ENCODE measurements at regions of chr4 and their contacts with region 1.

Region 1: GRCh38 chr4:112636688-112637551 is at the starts of genes LARP7 and ZGRF1:
- DNase-seq: peak; percentile 99
- ATAC-seq: peak; percentile 95
- H3K4me3 Mint-ChIP-seq: no peak within 1 kb of the TSS
- H3K27ac Mint-ChIP-seq: peak within 1 kb of the TSS; percentile 68
- H3K4me1 Mint-ChIP-seq: peaks cover 23% of the 10 kb centered on the region
- H3K27me3 Mint-ChIP-seq: no peaks in the 10 kb centered on the region
- total RNA-seq, gene LARP7: 46.5 to 47.1 TPM
- total RNA-seq, gene ZGRF1: 38.4 to 45.0 TPM

Region 2: DNA sequence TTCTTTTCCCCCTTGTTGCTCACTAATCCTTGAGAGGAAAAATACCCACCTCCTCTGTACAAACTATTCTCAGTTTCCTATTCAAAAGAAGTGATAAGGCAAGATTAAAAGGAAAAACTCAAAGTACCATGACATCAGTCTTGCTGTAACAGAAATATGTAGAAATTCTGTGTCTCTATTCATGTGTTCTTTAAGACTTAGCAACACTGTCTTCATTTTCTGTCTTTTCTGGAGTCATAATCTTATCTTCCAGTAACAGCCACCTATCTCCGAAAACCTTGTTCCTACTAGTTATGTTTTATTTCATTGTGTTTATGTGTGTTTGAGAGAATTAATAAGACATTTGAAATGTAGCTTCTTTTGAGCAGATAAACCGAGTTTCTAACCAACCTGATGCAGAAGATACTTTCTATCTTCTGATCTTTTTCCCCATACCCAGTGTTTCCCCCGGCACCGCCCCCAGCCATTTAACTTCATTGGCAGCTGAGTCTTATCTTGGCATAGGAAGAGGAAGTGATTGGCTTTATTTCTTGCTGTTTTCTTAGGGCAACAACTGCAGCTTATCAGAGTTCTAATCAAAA is 483.6 kb before region 1 on chr4:
- CTCF ChIA-PET with region 1: no interaction called
- POLR2A ChIA-PET with region 1: no interaction called
- intact Hi-C with region 1: loop called in 1 of 2 experiments (anchors 2 kb)
- DNase-seq: peak; percentile 45
- ATAC-seq: peak; percentile 59
- H3K4me3 Mint-ChIP-seq: peak overlapping the region; percentile 62
- H3K27ac Mint-ChIP-seq: peak overlapping the region; percentile 91
- H3K4me1 Mint-ChIP-seq: peaks cover 60% of the 10 kb centered on the region
- H3K27me3 Mint-ChIP-seq: no peaks in the 10 kb centered on the region

Region 3: GRCh38 chr4:112664611-112665010 is 27.7 kb after region 1 on chr4:
- CTCF ChIA-PET with region 1: no interaction called
- POLR2A ChIA-PET with region 1: no interaction called
- intact Hi-C with region 1: no loop called
- DNase-seq: no peak
- ATAC-seq: no peak
- H3K4me3 Mint-ChIP-seq: no peak overlapping the region
- H3K27ac Mint-ChIP-seq: no peak overlapping the region
- H3K4me1 Mint-ChIP-seq: no peaks in the 10 kb centered on the region
- H3K27me3 Mint-ChIP-seq: no peaks in the 10 kb centered on the region

Region 4: DNA sequence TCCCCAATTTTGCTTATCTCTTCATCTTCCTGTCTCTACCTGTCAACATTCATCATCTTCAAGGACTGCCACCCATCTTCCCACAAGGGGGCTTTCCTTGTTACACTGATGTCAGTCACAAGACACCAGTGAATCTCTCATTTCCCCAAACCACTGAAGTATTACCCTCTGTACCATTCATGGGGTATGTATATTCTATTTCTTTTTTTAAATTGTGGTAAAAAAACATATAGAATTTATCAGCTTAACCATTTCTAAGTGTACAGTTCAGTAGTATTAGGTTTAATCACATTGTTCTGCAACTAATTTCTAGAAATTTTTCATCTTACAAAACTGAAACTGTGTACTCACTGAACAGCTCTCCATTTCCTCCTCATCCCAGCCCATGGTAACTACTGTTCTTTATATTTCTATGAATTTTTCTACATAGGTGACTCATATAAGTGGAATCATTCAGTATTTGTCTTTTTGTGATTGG is 98.6 kb after region 1 on chr4:
- CTCF ChIA-PET with region 1: no interaction called
- POLR2A ChIA-PET with region 1: no interaction called
- intact Hi-C with region 1: loop called in 1 of 2 experiments (anchors 1 kb)
- DNase-seq: peak; percentile 23
- ATAC-seq: peak; percentile 94
- H3K4me3 Mint-ChIP-seq: no peak overlapping the region
- H3K27ac Mint-ChIP-seq: peak overlapping the region; percentile 72
- H3K4me1 Mint-ChIP-seq: peaks cover 18% of the 10 kb centered on the region
- H3K27me3 Mint-ChIP-seq: no peaks in the 10 kb centered on the region

Region 5: DNA sequence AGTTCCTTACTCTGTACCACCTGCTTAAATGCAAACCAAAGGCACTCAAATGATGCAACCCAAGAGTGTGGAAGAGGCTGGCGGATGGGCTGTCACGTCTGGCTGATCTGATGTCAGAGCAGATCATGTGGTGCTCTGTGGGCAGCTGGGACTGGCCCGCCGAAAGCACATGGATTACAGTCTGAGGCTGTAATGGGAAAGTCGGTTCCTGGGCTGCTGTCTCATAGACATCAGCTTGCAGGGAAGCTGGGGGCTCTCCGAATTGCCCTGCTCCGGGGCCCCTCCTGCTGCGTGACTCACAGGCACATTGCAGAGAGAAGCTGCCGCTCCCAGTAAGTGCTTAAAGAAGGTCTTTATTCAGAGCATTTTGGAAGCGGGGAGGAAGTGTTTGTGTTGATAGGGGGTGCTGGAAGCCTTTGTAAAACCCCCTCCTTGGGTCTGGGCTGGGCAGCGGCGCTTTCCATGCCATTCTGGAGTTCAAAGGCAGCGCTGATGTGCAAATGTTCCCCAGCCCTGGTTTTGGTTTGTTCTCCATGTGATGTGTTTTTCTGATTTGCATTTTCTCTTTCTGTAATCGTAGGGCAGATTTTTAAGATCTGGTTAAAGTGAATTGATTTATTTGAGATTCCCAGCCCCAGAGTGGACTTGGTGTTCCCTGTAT is 181.1 kb after region 1 on chr4:
- CTCF ChIA-PET with region 1: no interaction called
- POLR2A ChIA-PET with region 1: no interaction called
- intact Hi-C with region 1: loop called in 1 of 2 experiments (anchors 1 kb)
- DNase-seq: peak; percentile 85
- ATAC-seq: peak; percentile 95
- H3K4me3 Mint-ChIP-seq: peak overlapping the region; percentile 73
- H3K27ac Mint-ChIP-seq: peak overlapping the region; percentile 85
- H3K4me1 Mint-ChIP-seq: peaks cover 17% of the 10 kb centered on the region
- H3K27me3 Mint-ChIP-seq: peaks cover 35% of the 10 kb centered on the region

Region 6: GRCh38 chr4:112889619-112890527 is 253.0 kb after region 1 on chr4:
- CTCF ChIA-PET with region 1: no interaction called
- POLR2A ChIA-PET with region 1: no interaction called
- intact Hi-C with region 1: no loop called
- DNase-seq: no peak
- ATAC-seq: no peak
- H3K4me3 Mint-ChIP-seq: no peak overlapping the region
- H3K27ac Mint-ChIP-seq: no peak overlapping the region
- H3K4me1 Mint-ChIP-seq: no peaks in the 10 kb centered on the region
- H3K27me3 Mint-ChIP-seq: peaks cover 2% of the 10 kb centered on the region

Measured in activated CD4-positive, alpha-beta T cell treated with anti-CD3 and anti-CD28 coated beads for 36 hours (primary cell).